Left ventricle myocardium superior (tissue), 1 donor: ENCODE measurements at regions of chr10 and their contacts with region 1.

Region 1: DNA sequence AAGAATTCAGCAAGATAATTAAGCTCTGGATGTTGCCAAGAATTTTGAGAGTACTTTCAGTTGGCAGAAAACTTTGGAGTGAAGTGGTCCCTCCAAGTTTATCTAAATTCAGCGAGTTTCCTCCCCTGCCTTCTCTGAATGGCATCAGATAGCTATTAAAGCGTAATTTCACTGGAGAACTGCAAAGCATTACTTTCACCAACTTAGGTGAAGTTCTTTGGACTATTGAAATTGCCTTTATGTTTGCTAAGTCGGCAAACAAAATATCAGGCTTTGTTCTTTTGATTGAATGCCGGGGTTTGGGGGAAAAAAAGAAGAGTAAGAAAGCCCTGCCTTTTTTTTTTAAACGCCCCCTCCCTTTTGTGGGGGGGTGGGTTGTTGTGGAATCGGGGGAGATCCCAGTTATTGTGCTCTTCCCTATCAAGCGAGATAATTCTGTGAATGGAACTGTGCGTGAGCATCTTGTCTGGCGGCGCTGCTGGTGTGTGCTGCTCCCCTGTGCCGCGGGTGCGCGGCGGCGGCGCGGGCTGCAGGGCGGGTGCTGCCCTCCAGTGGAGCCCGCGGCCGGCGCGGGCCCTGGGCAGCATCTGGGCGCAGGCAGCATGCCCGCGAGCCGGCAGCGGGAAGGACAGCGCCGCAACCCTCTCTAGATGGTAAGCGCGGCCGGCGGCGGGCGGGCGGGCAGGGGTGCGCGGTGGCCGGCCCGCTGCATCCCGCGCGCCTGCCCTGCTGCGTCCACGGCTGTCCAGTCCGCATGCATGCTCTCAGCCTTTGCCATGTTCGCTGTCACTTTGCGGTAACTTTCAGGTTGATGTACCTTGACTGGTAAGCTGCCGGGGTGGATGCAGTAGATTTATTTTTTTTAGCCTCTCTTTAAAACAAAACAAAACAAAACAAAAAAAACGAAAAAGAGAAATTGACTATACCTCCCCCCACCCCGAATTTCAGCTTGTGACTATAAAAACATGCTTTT is 176.5 kb downstream of the TCF7L2 start:
- DNase-seq: peak; percentile 87
- ATAC-seq: peak; percentile 95

Region 2: GRCh38 chr10:112721080-112721698 is 405.3 kb before region 1 on chr10:
- intact Hi-C with region 1: loop called (anchors 10 kb)
- DNase-seq: no peak
- ATAC-seq: peak; percentile 57

Region 3: DNA sequence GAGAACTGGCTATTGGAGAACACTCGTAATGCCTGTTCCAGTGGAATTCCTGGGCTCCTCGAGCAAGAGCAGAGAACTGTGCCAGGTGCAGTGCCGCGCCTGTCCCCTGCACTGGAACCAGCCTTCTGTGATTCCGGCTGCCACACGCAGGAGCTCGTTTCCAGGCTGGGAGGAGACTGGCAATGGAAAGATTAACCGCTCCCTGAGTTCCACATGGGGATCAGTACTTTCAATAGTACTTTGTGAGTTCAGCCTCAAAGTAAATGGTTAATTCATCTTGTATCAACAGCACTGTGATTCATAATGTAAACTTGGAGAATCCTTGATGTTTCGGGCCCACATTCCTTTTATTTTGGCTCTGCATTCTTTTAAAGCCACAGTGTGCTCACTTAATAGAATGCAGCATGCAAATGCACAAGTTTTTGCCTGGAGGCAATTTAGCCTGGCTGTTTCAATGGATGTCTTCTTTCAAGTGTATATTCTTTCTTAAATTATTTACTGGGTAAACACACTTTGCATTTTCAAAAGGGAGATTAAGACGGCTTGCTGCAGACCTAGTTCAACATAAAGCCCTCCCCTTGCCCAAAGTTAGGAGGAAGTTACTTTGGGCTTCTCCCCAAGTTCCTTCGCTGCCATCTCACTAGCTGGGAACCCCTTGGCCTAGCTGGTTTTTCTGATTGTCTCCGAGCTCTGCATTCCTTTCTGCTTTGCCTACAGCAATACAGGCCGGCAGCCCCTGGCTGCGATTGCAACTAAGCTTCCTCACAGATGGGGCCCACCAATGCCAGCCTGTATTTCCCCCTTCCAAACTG is 314.6 kb before region 1 on chr10:
- intact Hi-C with region 1: loop called (anchors 10 kb)
- DNase-seq: no peak
- ATAC-seq: peak; percentile 29

Region 4: GRCh38 chr10:113202018-113202417 is 75.5 kb after region 1 on chr10:
- intact Hi-C with region 1: no loop called
- DNase-seq: no peak
- ATAC-seq: no peak

Region 5: DNA sequence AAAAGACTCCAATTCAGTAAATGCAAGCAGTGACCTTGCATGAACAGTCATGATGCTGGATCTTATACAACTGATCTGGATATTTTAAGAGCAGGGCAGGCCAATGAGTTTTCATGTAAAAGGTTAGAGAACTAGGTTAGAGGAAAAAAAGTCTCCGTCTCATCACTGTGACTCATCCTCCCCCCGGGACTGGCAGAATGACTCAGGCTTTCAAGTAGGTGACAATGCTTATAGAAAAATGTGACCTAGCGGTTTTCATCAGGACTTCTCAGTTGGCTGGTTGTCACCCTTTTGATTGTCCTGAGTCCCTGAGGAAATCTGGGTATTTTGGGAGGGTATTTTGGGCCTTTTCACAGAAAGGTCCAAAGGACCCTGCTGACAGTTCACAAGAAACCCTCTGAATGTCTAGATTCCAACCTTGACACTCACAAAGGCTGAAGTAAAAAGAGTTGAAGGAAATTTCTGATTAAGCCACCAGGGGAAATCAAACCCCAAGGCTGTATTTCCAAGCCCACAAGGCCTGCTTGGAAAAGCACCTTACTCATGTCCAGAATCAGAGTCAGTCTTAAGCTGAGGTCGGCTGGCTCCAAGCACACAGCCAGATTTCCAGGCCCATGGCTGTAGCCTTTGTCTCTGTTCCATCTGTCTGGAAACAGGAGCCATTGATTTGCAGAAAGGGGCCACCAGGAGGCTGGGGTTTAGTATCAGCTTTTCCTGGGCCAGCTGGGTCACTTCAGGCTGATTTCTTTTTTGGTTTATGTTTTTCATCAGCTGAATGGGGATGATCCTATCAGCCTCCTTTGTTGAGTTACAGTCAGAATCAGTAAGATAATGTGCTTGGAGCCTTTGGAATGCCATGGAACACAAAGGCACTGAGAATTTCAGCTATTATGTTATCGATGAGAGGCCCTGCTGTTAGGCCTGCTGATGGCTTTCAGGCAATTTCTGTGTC is 199.9 kb after region 1 on chr10:
- intact Hi-C with region 1: no loop called
- DNase-seq: peak; percentile 44
- ATAC-seq: peak; percentile 57

Region 6: DNA sequence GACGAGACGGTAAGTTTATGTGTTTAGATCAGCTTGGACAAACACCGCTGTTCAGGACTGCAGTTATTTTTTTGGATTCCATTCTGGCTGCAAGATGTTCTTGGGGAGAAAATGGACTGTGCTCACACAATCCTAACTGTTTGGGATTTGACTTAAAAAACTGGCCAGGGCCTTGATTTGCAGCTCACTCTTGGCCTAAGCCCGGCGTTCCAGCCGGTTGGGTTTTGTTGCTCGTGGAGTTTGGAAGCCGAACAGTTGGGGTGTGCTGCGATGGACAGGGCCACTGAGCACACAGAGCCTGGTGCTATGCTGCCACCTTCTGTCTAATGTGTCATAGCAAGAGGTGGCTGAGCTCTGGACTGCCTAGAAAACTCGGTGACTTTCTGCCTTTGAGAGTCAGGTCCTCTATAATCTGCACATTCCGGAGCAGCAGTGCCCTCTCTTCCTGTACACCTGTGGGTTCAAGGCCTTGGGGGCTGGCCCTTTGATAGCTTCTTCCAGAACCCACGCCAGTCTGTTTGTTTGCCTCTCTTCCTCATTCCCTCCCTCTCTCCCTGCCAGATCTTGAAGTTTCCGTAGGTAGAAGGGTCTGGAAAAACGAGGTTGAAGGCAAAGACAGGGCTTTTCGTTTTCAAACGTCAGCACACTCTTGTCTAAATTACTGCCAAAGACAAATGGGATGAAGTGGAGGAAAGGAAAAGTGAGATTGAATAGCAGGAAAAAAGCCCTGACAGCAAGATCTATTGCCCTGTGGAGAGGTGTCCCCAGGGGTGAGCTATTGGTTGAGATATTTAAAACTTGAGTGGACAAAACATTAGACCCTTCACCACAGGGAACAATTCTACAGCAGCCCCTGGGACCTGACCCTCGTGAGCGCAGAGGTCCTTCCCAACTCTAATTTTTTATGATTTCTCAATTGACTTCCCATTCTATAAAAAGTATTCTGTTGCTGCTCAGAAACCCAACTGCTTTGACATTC is 258.8 kb after region 1 on chr10:
- intact Hi-C with region 1: loop called (anchors 10 kb)
- DNase-seq: peak; percentile 88
- ATAC-seq: peak; percentile 98